Mammary epithelial cell (primary cell): ENCODE measurements at regions of chr14 and their contacts with region 1.

Region 1: GRCh38 chr14:88385345-88386101 is at the start of gene SPATA7:
- DNase-seq: peak; percentile 81
- H3K4me3 ChIP-seq: peak within 1 kb of the TSS; percentile 83 to 93 (median 86)
- H3K27ac ChIP-seq: peak within 1 kb of the TSS; percentile 70
- H3K4me1 ChIP-seq: peaks cover 11% of the 10 kb centered on the region
- H3K27me3 ChIP-seq: peaks cover 2% of the 10 kb centered on the region
- CTCF ChIP-seq: no peak
- total RNA-seq, gene SPATA7: 7.8 to 16.0 TPM

Region 2: DNA sequence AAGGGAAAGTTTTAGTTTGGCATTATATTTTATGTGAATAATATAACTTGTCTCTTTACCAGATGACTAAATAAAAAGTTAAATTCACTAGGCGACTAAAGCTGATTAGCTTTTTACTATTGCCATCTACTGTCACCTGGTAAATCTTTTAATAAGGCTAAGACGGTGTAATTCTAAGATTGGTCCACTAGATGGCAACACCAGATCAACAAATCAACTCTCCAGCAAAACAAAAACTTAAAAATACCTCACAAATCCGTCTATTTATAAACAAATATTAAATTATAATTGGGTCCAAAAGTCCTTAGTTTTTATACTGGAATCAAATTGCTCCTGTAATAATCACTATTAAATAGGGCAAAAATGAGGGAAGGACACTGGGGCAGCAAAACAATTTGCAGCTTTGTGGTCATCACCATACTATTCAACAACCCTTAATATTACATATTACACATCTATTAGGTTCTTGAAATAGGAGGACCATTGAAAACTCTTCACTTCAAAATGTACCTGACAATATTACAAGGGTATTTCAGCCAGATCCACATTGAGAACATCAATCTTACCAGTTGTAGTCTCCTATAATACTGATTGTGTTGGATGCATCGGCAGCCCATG is 440.4 kb before region 1 on chr14:
- CTCF ChIA-PET with region 1: no interaction called
- dilution Hi-C with region 1: no loop called
- in situ Hi-C with region 1: no loop called
- intact Hi-C with region 1: loop called (anchors 10 kb)
- DNase-seq: peak; percentile 23
- H3K4me3 ChIP-seq: no peak overlapping the region
- H3K27ac ChIP-seq: no peak overlapping the region
- H3K4me1 ChIP-seq: no peaks in the 10 kb centered on the region
- H3K27me3 ChIP-seq: no peaks in the 10 kb centered on the region
- CTCF ChIP-seq: peak; percentile 44 to 54

Region 3: GRCh38 chr14:87992718-87993628 is 392.6 kb before region 1 on chr14 and contains the start of gene GALC:
- CTCF ChIA-PET with region 1: no interaction called
- dilution Hi-C with region 1: no loop called
- in situ Hi-C with region 1: no loop called
- intact Hi-C with region 1: loop called (anchors 10 kb)
- DNase-seq: peak; percentile 75
- H3K4me3 ChIP-seq: peak within 1 kb of the TSS; percentile 39 to 62 (median 60)
- H3K27ac ChIP-seq: peak within 1 kb of the TSS; percentile 15
- H3K4me1 ChIP-seq: peaks cover 8% of the 10 kb centered on the region
- H3K27me3 ChIP-seq: no peaks in the 10 kb centered on the region
- CTCF ChIP-seq: peak in 1 of 2 donors; percentile 7
- total RNA-seq, gene GALC: 7.1 to 20.2 TPM

Region 4: DNA sequence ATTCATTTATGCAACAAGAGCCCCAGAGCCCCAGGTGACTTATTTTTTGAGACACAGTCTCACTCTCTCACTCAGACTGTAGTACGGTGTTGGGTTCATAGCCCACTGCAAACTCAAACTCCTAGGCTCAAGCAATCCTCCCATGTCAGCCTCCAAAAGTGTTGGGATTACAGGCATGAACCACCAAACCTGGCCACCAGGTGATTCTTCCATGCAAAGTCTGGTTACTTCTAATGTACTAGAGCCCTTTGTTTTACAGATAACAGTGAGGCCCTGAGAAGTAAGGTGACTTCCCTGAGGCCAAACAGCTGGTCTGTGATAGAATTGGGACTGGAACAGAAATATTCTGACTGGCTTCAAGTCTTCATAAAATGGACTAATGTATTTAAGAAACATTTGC is 52.5 kb before region 1 on chr14:
- CTCF ChIA-PET with region 1: no interaction called
- dilution Hi-C with region 1: no loop called
- in situ Hi-C with region 1: no loop called
- intact Hi-C with region 1: no loop called
- DNase-seq: no peak
- H3K4me3 ChIP-seq: no peak overlapping the region
- H3K27ac ChIP-seq: no peak overlapping the region
- H3K4me1 ChIP-seq: no peaks in the 10 kb centered on the region
- H3K27me3 ChIP-seq: peaks cover 3% of the 10 kb centered on the region
- CTCF ChIP-seq: no peak

Region 5: DNA sequence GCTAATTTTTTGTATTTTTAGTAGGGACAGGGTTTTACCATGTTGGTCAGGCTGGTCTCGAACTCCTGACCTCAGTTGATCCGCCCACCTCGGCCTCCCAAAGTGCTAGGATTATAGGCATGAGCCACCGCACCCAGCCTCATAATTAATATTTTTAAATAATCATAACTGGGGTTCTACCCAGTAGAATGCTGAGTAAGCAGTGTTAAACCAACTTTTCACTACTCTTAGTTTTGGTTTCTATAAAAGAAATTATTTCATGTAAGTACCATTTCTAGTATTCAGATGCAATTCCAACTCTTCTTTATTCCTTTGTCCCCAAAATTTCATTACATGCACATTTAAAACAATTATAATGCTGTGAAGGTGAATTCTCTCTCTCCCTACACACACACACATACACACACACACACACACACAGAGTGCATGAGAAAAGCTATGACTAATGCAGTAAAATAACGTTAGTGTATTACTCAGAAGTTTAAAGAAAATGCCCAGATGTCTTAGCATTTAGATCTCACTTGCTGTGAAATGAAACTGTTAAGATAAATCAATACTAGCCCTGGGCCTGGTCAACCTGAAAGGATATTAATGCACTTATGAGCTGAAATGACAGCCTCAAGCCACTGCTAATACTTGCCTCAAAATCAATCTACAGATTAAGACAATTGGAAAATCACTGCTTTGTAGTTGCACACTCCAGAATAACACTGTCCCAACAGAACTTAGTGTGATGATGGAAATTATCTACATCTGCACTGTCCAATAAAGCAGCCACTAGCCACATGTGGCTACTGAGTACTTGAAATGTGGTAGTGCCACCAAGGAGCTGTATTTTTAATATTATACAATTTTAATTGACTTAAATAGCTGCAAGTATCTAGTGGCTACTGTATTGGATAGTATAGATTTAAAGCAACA is 133.3 kb after region 1 on chr14:
- CTCF ChIA-PET with region 1: no interaction called
- dilution Hi-C with region 1: no loop called
- in situ Hi-C with region 1: no loop called
- intact Hi-C with region 1: no loop called
- DNase-seq: peak; percentile 73
- H3K4me3 ChIP-seq: no peak overlapping the region
- H3K27ac ChIP-seq: no peak overlapping the region
- H3K4me1 ChIP-seq: peaks cover 3% of the 10 kb centered on the region
- H3K27me3 ChIP-seq: no peaks in the 10 kb centered on the region
- CTCF ChIP-seq: no peak

Region 6: GRCh38 chr14:88562831-88563686 is 177.5 kb after region 1 on chr14 and contains the start of gene ZC3H14:
- CTCF ChIA-PET with region 1: no interaction called
- dilution Hi-C with region 1: no loop called
- in situ Hi-C with region 1: no loop called
- intact Hi-C with region 1: loop called (anchors 2 kb)
- DNase-seq: peak; percentile 89
- H3K4me3 ChIP-seq: peak within 1 kb of the TSS; percentile 80 to 99 (median 98)
- H3K27ac ChIP-seq: peak within 1 kb of the TSS; percentile 48
- H3K4me1 ChIP-seq: peaks cover 9% of the 10 kb centered on the region
- H3K27me3 ChIP-seq: no peaks in the 10 kb centered on the region
- CTCF ChIP-seq: no peak
- total RNA-seq, gene ZC3H14: 60.7 to 70.3 TPM